Gastrocnemius medialis (tissue), 4 donors: ENCODE measurements at regions of chr13 and their contacts with region 1.

Region 1: GRCh38 chr13:52947921-52948373 is 80.7 kb upstream of the OLFM4 start:
- DNase-seq: no peak
- ATAC-seq: no peak
- H3K4me3 ChIP-seq: no peak overlapping the region
- H3K27ac ChIP-seq: no peak overlapping the region
- H3K4me1 ChIP-seq: no peaks in the 10 kb centered on the region
- H3K27me3 ChIP-seq: no peaks in the 10 kb centered on the region
- CTCF ChIP-seq: no peak
- POLR2A ChIP-seq: no peak

Region 2: DNA sequence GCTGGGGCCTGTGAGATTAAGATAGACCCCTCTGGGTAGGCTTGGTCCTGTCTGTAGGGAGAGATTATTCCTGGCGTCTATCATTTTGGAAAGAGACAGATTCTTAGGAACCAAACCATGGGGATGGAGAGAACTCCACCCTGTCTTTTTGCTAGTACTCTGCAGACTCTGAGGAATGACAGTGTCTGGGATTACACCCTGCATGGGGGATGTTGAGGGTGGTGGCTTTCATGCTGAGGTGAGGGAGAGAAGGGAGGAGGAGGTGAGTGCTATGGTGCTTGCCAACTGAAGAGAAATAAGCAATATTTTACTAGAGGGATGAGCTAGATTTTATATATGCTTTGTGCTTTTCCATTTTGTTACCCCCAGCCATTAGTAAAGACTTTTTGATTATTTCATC is 25.0 kb before region 1 on chr13:
- in situ Hi-C with region 1: no loop called
- intact Hi-C with region 1: loop called (anchors 1 kb)
- DNase-seq: no peak
- ATAC-seq: no peak
- H3K4me3 ChIP-seq: no peak overlapping the region
- H3K27ac ChIP-seq: no peak overlapping the region
- H3K4me1 ChIP-seq: no peaks in the 10 kb centered on the region
- H3K27me3 ChIP-seq: no peaks in the 10 kb centered on the region
- CTCF ChIP-seq: no peak
- POLR2A ChIP-seq: no peak